Activated CD8-positive, alpha-beta T cell treated with anti-CD3 and anti-CD28 coated beads, Interleukin-2, amount 10 ng/mL, durations not matched to agents 7 days and 5 days (primary cell): ENCODE measurements at regions of chr17 and their contacts with region 1.

Region 1: DNA sequence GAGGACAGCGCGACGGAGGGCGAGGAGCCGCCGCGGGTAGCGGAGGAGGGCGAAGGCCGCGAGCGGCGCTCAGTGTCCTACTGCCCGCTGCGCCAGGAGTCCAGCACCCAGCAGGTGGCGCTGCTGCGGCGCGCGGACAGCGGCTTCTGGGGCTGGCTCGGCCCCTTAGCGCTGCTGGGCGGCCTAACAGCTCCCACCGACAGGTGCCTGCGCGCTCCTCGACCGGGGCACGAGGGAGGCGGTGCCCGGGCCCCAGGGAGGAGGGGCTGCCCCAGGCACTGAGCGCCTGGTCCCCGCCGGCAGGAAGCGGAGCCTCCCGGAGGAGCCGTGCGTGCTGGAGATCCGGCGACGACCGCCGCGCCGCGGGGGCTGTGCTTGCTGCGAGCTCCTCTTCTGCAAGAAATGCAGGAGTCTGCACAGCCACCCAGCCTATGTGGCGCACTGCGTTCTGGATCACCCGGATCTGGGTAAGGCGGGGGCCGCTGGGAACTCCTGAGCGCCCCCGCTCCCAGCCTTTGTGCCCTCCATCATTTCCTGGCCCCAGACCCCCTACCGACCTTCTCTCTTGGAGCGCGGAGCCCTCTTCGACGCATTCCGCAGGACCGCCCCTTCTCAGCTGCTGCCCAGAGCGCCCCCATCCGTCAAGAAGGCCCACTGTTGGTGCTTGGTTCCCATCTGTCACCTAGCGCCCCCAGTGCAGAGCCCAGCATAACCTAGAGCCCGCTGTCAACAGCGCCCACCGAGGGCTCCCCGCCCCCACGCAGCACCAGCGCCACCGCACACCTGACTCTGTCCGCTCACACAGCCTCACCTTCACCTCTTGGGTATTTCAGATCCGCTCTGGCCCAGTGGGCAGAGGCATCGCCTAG is 3.7 kb downstream of the C17orf50 start:
- DNase-seq: peak; percentile 90
- ATAC-seq: peak; percentile 96
- H3K4me3 Mint-ChIP-seq: peak overlapping the region; percentile 83
- H3K27ac Mint-ChIP-seq: peak overlapping the region; percentile 86
- H3K4me1 Mint-ChIP-seq: peaks cover 17% of the 10 kb centered on the region
- H3K27me3 Mint-ChIP-seq: no peaks in the 10 kb centered on the region

Region 2: GRCh38 chr17:35376245-35376644 is 388.1 kb before region 1 on chr17:
- CTCF ChIA-PET with region 1: no interaction called
- POLR2A ChIA-PET with region 1: no interaction called
- DNase-seq: no peak
- ATAC-seq: no peak
- H3K4me3 Mint-ChIP-seq: no peak overlapping the region
- H3K27ac Mint-ChIP-seq: peak overlapping the region; percentile 3
- H3K4me1 Mint-ChIP-seq: peaks cover 32% of the 10 kb centered on the region
- H3K27me3 Mint-ChIP-seq: peaks cover 3% of the 10 kb centered on the region

Region 3: GRCh38 chr17:35716897-35717465 is 47.4 kb before region 1 on chr17:
- CTCF ChIA-PET with region 1: interaction called, 16 read pairs
- POLR2A ChIA-PET with region 1: no interaction called
- DNase-seq: no peak
- ATAC-seq: no peak
- H3K4me3 Mint-ChIP-seq: no peak overlapping the region
- H3K27ac Mint-ChIP-seq: no peak overlapping the region
- H3K4me1 Mint-ChIP-seq: no peaks in the 10 kb centered on the region
- H3K27me3 Mint-ChIP-seq: no peaks in the 10 kb centered on the region

Region 4: GRCh38 chr17:35747540-35748017 is 16.8 kb before region 1 on chr17:
- CTCF ChIA-PET with region 1: interaction called, 81 read pairs
- POLR2A ChIA-PET with region 1: no interaction called
- DNase-seq: peak; percentile 87
- ATAC-seq: peak; percentile 87
- H3K4me3 Mint-ChIP-seq: no peak overlapping the region
- H3K27ac Mint-ChIP-seq: no peak overlapping the region
- H3K4me1 Mint-ChIP-seq: peaks cover 9% of the 10 kb centered on the region
- H3K27me3 Mint-ChIP-seq: peaks cover 31% of the 10 kb centered on the region

Region 5: GRCh38 chr17:35788504-35789368 is 24.4 kb after region 1 on chr17:
- CTCF ChIA-PET with region 1: interaction called, 64 read pairs
- POLR2A ChIA-PET with region 1: no interaction called
- DNase-seq: no peak
- ATAC-seq: no peak
- H3K4me3 Mint-ChIP-seq: no peak overlapping the region
- H3K27ac Mint-ChIP-seq: no peak overlapping the region
- H3K4me1 Mint-ChIP-seq: peaks cover 7% of the 10 kb centered on the region
- H3K27me3 Mint-ChIP-seq: peaks cover 24% of the 10 kb centered on the region

Region 6: GRCh38 chr17:35801583-35802224 is 37.3 kb after region 1 on chr17:
- CTCF ChIA-PET with region 1: interaction called, 415 read pairs
- POLR2A ChIA-PET with region 1: no interaction called
- DNase-seq: peak; percentile 44
- ATAC-seq: peak; percentile 26
- H3K4me3 Mint-ChIP-seq: no peak overlapping the region
- H3K27ac Mint-ChIP-seq: peak overlapping the region; percentile 63
- H3K4me1 Mint-ChIP-seq: peaks cover 33% of the 10 kb centered on the region
- H3K27me3 Mint-ChIP-seq: peaks cover 19% of the 10 kb centered on the region

Region 7: DNA sequence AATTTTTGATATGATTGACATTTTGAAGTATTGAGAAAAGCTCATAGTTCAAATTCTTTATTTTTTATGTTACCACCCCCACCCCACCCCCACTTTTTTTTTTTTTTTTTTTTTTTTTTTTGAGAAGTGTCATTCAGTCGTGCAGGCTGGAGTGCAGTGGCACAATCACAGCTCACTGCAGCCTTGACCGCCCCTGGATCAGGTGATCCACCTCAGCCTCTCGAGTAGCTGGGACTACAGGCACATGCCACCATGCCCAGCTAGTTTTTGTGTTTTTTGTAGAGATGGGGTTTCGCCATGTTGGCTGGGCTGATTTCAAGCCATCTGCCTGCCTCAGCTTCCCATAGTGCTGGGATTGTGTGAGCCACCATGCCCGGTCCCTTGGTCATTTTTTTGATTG is 52.4 kb after region 1 on chr17:
- CTCF ChIA-PET with region 1: interaction called, 415 read pairs
- POLR2A ChIA-PET with region 1: interaction called, 4 read pairs
- DNase-seq: no peak
- ATAC-seq: no peak
- H3K4me3 Mint-ChIP-seq: no peak overlapping the region
- H3K27ac Mint-ChIP-seq: no peak overlapping the region
- H3K4me1 Mint-ChIP-seq: peaks cover 44% of the 10 kb centered on the region
- H3K27me3 Mint-ChIP-seq: no peaks in the 10 kb centered on the region

Region 8: DNA sequence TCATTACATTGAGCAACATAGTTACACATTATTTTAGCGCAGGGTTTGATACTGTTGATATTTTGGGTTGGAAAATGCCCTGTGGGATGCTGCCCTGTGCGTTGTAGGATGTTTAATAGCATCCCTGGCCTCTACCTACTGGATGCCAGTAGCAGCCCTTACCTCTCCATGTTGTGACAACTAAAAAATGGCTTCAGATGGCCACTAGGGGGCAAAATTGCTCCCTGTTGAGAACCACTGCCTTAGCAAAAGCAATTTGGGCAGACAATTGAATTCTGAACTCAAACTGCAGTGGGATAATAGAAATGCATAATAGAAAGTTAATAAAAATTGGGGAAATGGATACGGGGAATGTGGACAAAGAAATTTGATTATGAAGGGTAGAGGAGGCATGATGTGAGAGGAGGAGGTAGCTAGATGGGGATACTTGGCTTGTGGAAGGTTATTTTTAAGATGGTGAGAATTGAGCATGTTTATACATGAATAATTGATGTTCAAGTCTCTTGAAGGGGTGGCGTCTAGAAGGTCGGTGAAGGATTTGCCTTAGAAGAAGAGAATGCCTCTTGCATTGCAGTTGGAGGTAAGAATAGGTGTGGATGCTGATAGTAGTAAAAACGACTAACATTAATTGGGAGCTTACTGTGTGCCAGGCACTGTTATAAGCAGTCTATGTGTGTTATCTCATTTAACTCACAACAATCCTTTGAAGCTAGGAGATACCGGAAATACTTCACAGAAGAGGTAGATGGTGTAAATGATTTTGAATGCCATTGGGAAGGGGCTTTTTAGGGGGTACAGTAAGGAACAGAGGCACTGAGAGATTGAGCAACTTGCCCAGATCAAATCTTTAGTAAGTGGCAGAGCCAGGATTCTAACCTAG is 85.4 kb after region 1 on chr17:
- CTCF ChIA-PET with region 1: interaction called, 12 read pairs
- POLR2A ChIA-PET with region 1: no interaction called
- DNase-seq: peak; percentile 84
- ATAC-seq: peak; percentile 92
- H3K4me3 Mint-ChIP-seq: no peak overlapping the region
- H3K27ac Mint-ChIP-seq: peak overlapping the region; percentile 61
- H3K4me1 Mint-ChIP-seq: peaks cover 22% of the 10 kb centered on the region
- H3K27me3 Mint-ChIP-seq: no peaks in the 10 kb centered on the region

Region 9: DNA sequence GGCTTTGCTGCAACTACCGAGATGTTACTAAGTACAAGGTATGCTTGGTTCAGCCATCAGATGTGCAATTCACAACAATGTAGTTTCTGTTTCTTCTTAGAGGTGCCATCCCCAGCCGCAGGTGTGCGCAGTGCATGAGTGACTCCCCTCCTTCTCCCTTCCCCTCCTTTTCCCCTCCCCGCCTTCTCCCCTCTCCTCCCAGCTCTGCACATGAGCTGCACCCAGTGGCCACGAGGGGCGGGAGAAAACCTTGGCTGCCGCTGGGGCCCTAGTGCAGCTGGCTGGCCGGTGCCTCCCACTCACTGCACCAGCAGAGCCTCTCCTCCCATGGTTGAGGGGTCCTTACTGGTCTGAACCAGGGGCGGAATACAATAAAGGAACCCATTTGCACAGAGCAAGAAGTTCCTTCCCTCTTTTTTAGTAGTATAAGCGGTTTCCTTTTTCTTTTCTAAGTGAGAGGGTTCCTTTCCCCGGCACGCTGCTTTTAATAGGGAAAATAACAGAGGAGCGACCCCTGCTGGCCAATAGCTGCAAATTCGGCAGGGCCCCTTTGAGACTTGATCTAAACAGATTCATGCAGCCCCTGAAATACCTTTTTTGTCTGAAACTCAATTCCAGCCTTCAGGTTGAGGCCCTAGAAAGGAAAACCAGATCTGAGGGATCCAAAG is 244.8 kb after region 1 on chr17:
- CTCF ChIA-PET with region 1: no interaction called
- POLR2A ChIA-PET with region 1: no interaction called
- DNase-seq: peak; percentile 27
- ATAC-seq: no peak
- H3K4me3 Mint-ChIP-seq: no peak overlapping the region
- H3K27ac Mint-ChIP-seq: no peak overlapping the region
- H3K4me1 Mint-ChIP-seq: peaks cover 7% of the 10 kb centered on the region
- H3K27me3 Mint-ChIP-seq: peaks cover 5% of the 10 kb centered on the region

Region 10: DNA sequence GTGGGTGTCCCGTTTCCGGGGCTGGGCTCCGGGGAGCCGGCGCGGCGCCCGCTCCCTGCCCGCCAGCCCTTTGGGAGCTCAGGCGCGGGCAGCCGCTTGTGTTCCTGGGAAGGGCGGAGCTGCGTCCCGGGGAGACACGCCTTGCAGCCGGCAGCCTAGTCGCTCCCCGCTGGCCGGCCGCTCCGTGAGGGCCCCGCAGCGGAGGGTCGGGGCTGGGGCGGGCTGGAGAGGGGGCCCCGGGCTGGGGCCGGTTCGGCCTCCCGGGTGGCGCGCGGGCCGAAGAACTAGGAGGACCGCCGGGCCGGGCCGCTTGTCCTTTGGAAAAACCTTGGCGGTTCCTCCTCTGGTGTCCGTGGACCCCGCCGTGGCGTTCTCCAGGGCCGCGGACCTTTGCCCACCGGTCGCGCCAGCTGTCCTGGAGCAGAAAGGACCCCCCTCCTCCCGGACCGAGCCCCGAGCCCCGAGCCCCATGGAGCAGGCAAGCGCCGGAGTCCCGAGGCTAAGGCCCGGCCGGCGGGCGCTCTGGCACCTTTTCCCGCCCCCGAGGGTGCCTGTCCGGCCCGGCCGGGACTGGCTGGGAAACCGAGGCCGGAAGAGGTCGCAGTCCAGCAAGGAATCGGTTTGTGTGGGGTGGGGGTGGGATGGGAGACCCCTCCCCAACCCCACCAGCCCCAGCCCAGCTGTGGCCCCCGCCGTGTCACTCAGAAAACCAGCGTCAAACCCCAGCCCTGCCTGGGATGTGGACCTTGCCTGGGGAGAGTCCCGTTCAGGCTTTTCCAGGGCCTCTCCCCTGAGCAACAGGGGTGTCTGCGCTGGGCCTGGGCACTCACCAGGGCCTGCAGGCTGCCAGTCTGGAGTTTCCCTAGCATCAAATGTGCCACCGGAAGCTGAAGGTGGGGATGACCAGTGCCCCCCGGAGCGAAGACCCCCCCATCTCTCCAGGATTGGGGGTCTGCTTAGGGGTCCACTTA is 418.9 kb after region 1 on chr17:
- CTCF ChIA-PET with region 1: no interaction called
- POLR2A ChIA-PET with region 1: no interaction called
- DNase-seq: no peak
- ATAC-seq: peak; percentile 56
- H3K4me3 Mint-ChIP-seq: peak overlapping the region; percentile 47
- H3K27ac Mint-ChIP-seq: peak overlapping the region; percentile 15
- H3K4me1 Mint-ChIP-seq: peaks cover 16% of the 10 kb centered on the region
- H3K27me3 Mint-ChIP-seq: peaks cover 28% of the 10 kb centered on the region